ENCODE measurements at regions of chr6 and their contacts with region 1.

Region 1: GRCh38 chr6:27078734-27079357 is 168.7 kb upstream of the PRSS16 start:
- DNase-seq: peak; percentile 21
- H3K4me3 ChIP-seq: peak overlapping the region; percentile 38
- CTCF ChIP-seq: peak; percentile 56

Region 2: DNA sequence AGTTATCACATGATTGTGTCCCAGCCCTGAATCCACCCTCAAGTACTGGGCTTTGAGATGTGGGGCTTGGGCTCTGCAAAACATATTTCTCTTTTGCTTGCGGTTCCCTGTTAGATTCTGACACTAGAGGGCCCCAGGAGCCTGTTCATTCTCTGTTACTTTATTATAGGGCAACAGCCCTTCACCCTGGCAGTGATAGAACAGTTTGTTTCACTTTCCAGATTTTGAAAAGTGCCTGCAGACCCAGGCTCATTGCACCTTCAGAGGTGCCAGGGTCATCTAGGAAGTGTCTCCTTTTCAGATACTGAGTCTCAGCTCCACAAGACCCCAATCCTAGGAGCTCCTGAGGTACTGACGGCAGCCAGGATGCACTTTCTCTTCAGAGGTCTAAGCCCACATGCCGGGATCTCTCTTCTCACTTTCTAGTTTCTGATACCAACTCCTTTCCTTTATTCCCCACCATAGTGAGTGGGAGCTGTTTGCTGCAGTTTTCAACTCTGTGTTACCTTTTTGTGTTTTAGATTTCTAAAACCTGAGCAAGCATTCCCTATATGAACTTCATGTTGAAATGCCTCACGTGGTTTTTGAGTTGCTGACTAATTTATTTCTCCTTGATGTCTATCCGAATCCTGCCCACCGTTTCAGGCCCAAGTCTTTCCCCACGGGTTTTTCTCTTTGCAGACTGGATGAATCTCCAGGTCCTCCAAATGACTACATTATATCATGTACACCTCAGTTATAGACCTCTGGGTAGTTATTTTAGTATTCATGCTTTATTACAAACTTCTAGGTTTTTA is 471.2 kb before region 1 on chr6:
- CTCF ChIA-PET with region 1: interaction called, 64 read pairs
- POLR2A ChIA-PET with region 1: no interaction called
- DNase-seq: no peak
- H3K4me3 ChIP-seq: peak overlapping the region; percentile 52
- CTCF ChIP-seq: peak; percentile 62

Region 3: GRCh38 chr6:26613689-26614683 is 464.9 kb before region 1 on chr6:
- CTCF ChIA-PET with region 1: interaction called, 55 read pairs
- POLR2A ChIA-PET with region 1: no interaction called
- DNase-seq: no peak
- H3K4me3 ChIP-seq: no peak overlapping the region
- CTCF ChIP-seq: no peak

Measured in AG04449 (cell line).